ENCODE measurements at regions of chr13 and their contacts with region 1.

Region 1: GRCh38 chr13:66405908-66406802 is 824.0 kb downstream of the PCDH9 start:
- DNase-seq: no peak
- H3K4me3 ChIP-seq: no peak overlapping the region
- H3K27ac ChIP-seq: no peak overlapping the region
- H3K4me1 ChIP-seq: peaks cover 0 to 2% (median 0%) of the 10 kb centered on the region in 4 donors
- H3K27me3 ChIP-seq: no peaks in the 10 kb centered on the region
- CTCF ChIP-seq: no peak
- EP300 ChIP-seq: no peak
- POLR2A ChIP-seq: no peak

Region 2: DNA sequence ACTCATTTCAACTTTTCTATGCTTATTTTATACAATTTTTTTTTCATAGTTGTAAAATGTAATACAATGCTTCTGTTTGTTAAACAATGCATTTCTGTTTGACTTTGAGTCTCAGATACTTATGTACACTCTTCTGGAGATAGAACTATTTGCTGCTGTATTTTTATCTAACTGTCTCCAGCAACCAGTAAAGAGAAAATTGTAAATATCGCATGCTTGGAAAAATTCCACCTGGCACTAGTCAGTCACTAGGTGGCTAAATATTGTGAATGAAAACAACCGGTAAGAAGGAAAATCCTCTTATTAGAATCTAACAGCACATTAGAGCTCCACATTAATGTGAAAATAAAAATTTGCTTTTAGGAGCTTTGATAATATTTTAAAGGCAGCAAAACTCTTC is 52.5 kb before region 1 on chr13:
- in situ Hi-C with region 1: no loop called
- intact Hi-C with region 1: loop called (anchors 10 kb)
- DNase-seq: no peak
- H3K4me3 ChIP-seq: no peak overlapping the region
- H3K27ac ChIP-seq: no peak overlapping the region
- H3K4me1 ChIP-seq: peaks cover 0 to 18% (median 0%) of the 10 kb centered on the region in 4 donors
- H3K27me3 ChIP-seq: no peaks in the 10 kb centered on the region
- CTCF ChIP-seq: no peak
- EP300 ChIP-seq: no peak
- POLR2A ChIP-seq: no peak

Measured in transverse colon (tissue), 4 donors.